Natural killer cell (primary cell): ENCODE measurements at regions of chr2 and their contacts with region 1.

Region 1: DNA sequence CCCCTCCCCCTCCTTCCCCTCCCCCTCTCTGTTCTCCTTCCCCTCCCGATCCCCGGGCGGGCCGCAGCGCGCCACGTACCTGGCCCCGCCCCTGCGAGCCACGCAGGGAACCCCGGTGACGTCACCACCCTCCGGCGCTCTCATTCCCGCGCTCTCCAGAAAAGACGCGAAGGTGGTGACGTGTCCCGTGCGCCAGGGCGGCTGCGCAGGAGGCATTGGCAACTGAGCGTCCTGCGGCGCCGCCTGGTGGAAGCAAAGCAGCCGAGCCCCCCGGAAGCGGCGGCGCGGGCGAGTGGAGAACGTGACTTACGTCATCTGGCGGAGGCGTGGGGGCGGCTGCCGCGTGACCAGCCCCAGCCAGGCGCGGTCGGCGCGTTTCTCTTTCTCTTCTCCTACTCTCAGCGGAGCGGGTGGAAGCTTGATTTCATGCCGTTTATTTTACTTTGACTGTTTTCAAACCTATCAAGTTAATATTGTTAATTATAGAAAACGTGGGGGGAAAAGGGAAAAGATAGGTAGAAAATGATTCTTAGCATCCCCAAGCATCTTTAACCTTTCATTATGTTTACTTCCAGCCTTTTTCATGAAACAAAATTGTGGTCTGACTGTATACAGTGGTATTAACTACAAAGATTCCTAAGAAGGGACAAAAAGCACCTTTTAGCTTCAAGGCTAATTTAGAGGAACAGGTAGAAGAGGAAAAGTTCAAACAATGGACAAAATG is 48.1 kb downstream of the C2orf42 start:
- DNase-seq: peak; percentile 100
- ATAC-seq: peak; percentile 60 to 86 (median 69)
- H3K4me3 ChIP-seq: peak overlapping the region; percentile 65
- H3K4me3 Mint-ChIP-seq: peak overlapping the region; percentile 94
- H3K27ac ChIP-seq: peak overlapping the region; percentile 98
- H3K27ac Mint-ChIP-seq: peak overlapping the region; percentile 98 to 100
- H3K4me1 ChIP-seq: peaks cover 46% of the 10 kb centered on the region
- H3K4me1 Mint-ChIP-seq: peaks cover 40 to 46% of the 10 kb centered on the region in 2 donors
- H3K27me3 ChIP-seq: no peaks in the 10 kb centered on the region
- H3K27me3 Mint-ChIP-seq: no peaks in the 10 kb centered on the region
- CTCF ChIP-seq: peak; percentile 85

Region 2: DNA sequence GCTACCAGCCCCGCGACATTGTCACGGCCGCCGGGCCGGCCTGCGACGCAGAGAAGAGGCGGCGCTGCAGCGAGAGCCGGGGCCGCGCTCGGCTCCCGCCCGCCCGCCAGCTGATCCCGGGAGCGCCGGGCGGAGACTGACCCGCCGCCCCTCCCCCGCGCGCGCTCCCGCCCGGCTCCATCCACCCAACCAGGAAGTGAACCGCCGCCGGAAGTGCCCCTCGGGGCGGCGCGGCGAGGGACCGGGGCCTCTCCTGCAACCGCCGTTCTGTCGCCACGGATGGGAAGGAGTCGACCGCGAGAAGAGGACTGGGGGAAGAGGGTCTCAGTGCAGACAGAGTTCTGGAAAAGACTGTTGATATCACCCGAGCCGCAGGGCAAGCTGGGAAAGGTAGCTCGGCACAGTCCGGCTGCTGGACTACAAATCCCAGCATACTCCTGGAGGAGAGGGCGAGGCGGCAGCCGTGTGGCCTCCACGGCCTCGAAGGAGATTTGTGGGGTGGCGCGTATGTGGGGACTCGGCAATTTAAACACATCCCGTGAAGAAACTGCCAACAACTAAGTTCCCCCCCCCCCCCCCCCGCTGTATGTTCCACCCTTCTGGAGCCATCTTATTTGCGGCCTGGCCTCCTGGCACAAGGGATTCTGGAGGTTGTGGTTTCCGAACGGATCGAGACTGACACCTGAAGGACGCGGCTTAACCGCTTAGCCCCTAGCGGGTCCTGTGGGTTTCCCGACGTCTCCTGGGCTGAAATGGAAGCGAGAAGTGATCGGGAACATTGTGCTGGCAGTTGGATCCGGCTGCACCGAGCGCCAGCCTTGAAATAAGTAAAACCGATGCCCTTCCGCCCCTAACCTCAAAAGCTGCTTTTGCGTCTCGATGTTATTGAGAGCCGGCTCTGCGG is 498.9 kb before region 1 on chr2 and contains the start of gene AAK1:
- intact Hi-C with region 1: loop called (anchors 5 kb)
- DNase-seq: peak; percentile 81 to 90
- ATAC-seq: peak; percentile 58 to 80 (median 74)
- H3K4me3 ChIP-seq: peak within 1 kb of the TSS; percentile 96
- H3K4me3 Mint-ChIP-seq: peak within 1 kb of the TSS; percentile 97
- H3K27ac ChIP-seq: peak within 1 kb of the TSS; percentile 84
- H3K27ac Mint-ChIP-seq: peak within 1 kb of the TSS; percentile 95 to 97
- H3K4me1 ChIP-seq: peaks cover 62% of the 10 kb centered on the region
- H3K4me1 Mint-ChIP-seq: peaks cover 81 to 82% of the 10 kb centered on the region in 2 donors
- H3K27me3 ChIP-seq: no peaks in the 10 kb centered on the region
- H3K27me3 Mint-ChIP-seq: no peaks in the 10 kb centered on the region
- CTCF ChIP-seq: no peak
- total RNA-seq, gene AAK1: 174 to 249 (median 204) TPM

Region 3: GRCh38 chr2:69914170-69914960 is 228.4 kb before region 1 on chr2:
- intact Hi-C with region 1: loop called (anchors 1 kb)
- DNase-seq: peak; percentile 99 to 100
- ATAC-seq: peak; percentile 85 to 95 (median 87)
- H3K4me3 ChIP-seq: peak overlapping the region; percentile 76
- H3K4me3 Mint-ChIP-seq: peak overlapping the region; percentile 85
- H3K27ac ChIP-seq: peak overlapping the region; percentile 91
- H3K27ac Mint-ChIP-seq: peak overlapping the region; percentile 91 to 98
- H3K4me1 ChIP-seq: peaks cover 13% of the 10 kb centered on the region
- H3K4me1 Mint-ChIP-seq: peaks cover 25 to 32% of the 10 kb centered on the region in 2 donors
- H3K27me3 ChIP-seq: no peaks in the 10 kb centered on the region
- H3K27me3 Mint-ChIP-seq: no peaks in the 10 kb centered on the region
- CTCF ChIP-seq: no peak

Region 4: DNA sequence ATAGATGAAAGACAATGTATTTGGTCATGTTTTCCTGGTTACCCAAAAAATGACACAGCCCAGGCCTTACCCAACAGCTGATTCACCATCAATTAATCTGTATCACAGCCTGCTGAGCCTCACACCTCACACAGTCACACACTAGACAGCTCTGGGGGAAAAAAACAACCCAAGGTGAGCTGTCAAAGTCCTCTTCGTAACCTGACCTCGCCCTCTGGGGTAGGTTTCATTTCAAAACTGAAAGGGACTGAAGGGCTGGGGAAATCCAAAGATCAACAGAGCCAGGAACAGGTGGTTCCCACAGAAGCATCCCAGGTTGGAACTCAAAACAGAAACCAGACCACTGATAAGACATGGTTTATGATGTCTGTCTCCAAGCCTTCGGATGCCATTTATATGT is 73.7 kb before region 1 on chr2:
- intact Hi-C with region 1: loop called (anchors 1 kb)
- DNase-seq: peak; percentile 58 to 93
- ATAC-seq: peak; percentile 84 to 93 (median 84)
- H3K4me3 ChIP-seq: no peak overlapping the region
- H3K4me3 Mint-ChIP-seq: peak overlapping the region; percentile 47
- H3K27ac ChIP-seq: peak overlapping the region; percentile 87
- H3K27ac Mint-ChIP-seq: peak overlapping the region; percentile 88 to 94
- H3K4me1 ChIP-seq: peaks cover 31% of the 10 kb centered on the region
- H3K4me1 Mint-ChIP-seq: peaks cover 31 to 35% of the 10 kb centered on the region in 2 donors
- H3K27me3 ChIP-seq: no peaks in the 10 kb centered on the region
- H3K27me3 Mint-ChIP-seq: no peaks in the 10 kb centered on the region
- CTCF ChIP-seq: no peak

Region 5: GRCh38 chr2:70094978-70095719 is 47.6 kb before region 1 on chr2:
- intact Hi-C with region 1: loop called (anchors 2 kb)
- DNase-seq: peak in 1 of 2 donors; percentile 87
- ATAC-seq: peak; percentile 89 to 90 (median 89)
- H3K4me3 ChIP-seq: peak overlapping the region; percentile 0
- H3K4me3 Mint-ChIP-seq: peak overlapping the region; percentile 71
- H3K27ac ChIP-seq: peak overlapping the region; percentile 88
- H3K27ac Mint-ChIP-seq: peak overlapping the region; percentile 97 to 99
- H3K4me1 ChIP-seq: peaks cover 37% of the 10 kb centered on the region
- H3K4me1 Mint-ChIP-seq: peaks cover 33 to 45% of the 10 kb centered on the region in 2 donors
- H3K27me3 ChIP-seq: no peaks in the 10 kb centered on the region
- H3K27me3 Mint-ChIP-seq: no peaks in the 10 kb centered on the region
- CTCF ChIP-seq: no peak

Region 6: DNA sequence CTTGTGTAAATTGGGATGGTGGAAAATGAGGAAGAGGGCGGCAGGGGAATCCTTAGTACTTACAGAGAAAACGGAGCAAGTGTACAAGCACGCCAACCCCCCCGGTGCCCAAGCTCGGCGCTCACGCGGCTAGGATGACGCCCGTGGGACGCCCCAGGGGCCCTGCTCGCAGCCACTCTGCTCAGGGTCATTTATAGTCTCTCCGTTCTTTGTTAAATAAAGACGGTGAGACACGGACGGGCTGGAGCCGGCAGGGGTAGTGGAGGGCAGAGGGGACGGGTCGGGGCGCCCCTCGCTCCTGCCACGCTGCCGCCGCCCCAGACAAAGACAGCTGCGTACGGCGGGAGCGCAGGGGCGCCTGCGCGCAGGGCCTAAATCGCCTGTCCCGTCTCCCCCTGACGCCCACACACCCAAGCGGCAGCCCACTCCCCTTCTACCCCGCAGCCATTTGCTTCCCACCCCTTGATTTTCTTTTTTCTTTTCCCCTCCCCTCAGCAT is 17.7 kb before region 1 on chr2:
- intact Hi-C with region 1: loop called (anchors 1 kb)
- DNase-seq: peak; percentile 68 to 81
- ATAC-seq: peak; percentile 63 to 72 (median 70)
- H3K4me3 ChIP-seq: peak overlapping the region; percentile 62
- H3K4me3 Mint-ChIP-seq: peak overlapping the region; percentile 94
- H3K27ac ChIP-seq: peak overlapping the region; percentile 100
- H3K27ac Mint-ChIP-seq: peak overlapping the region; percentile 96 to 98
- H3K4me1 ChIP-seq: peaks cover 63% of the 10 kb centered on the region
- H3K4me1 Mint-ChIP-seq: peaks cover 71 to 78% of the 10 kb centered on the region in 2 donors
- H3K27me3 ChIP-seq: no peaks in the 10 kb centered on the region
- H3K27me3 Mint-ChIP-seq: no peaks in the 10 kb centered on the region
- CTCF ChIP-seq: no peak

Region 7: DNA sequence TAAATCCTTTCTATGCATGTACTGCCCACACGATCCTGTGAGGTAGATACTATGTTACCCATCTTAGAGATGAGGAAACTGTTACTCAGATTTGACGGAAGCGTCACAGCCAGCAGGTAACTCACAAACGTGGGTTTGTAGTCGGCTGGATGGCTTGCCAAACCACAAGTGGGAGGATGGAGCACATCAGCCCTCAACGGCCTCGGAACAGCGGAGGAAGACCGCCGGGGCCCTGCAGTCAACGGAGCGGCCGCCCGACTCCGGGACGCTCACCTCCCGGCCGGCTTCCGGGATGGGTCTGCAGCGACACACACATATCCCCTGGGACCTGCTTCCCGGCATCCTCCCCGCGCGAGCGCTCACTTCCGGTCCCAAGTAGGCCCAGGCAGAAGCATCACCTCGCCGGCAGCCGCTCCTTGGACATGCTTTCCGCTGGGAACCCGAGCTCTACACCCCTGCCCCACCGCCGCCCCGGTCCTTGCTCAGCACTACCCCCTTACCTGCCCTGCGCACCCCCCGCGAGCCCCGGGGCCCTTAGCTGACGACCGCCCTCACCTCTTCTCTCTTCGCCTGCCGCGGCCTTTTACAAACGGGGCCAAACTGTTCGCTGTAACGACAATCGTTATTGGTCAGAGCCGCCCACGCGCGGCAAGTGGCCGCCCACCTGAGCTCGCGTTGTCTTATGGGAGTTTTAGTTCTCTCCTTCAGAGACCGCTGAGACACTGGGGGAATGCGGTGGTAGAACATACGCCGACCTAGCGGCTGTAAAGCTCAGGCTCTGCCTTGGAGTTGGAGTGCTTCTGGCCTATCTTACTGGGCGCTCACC is 47.9 kb after region 1 on chr2 and contains the start of gene C2orf42:
- intact Hi-C with region 1: loop called (anchors 2 kb)
- DNase-seq: peak; percentile 94 to 98
- ATAC-seq: peak; percentile 84 to 96 (median 88)
- H3K4me3 ChIP-seq: peak within 1 kb of the TSS; percentile 78
- H3K4me3 Mint-ChIP-seq: peak within 1 kb of the TSS; percentile 100
- H3K27ac ChIP-seq: peak within 1 kb of the TSS; percentile 90
- H3K27ac Mint-ChIP-seq: peak within 1 kb of the TSS; percentile 96 to 98
- H3K4me1 ChIP-seq: peaks cover 9% of the 10 kb centered on the region
- H3K4me1 Mint-ChIP-seq: peaks cover 16 to 19% of the 10 kb centered on the region in 2 donors
- H3K27me3 ChIP-seq: no peaks in the 10 kb centered on the region
- H3K27me3 Mint-ChIP-seq: no peaks in the 10 kb centered on the region
- CTCF ChIP-seq: no peak
- total RNA-seq, gene C2orf42: 22.7 to 31.5 (median 25.7) TPM

Region 8: DNA sequence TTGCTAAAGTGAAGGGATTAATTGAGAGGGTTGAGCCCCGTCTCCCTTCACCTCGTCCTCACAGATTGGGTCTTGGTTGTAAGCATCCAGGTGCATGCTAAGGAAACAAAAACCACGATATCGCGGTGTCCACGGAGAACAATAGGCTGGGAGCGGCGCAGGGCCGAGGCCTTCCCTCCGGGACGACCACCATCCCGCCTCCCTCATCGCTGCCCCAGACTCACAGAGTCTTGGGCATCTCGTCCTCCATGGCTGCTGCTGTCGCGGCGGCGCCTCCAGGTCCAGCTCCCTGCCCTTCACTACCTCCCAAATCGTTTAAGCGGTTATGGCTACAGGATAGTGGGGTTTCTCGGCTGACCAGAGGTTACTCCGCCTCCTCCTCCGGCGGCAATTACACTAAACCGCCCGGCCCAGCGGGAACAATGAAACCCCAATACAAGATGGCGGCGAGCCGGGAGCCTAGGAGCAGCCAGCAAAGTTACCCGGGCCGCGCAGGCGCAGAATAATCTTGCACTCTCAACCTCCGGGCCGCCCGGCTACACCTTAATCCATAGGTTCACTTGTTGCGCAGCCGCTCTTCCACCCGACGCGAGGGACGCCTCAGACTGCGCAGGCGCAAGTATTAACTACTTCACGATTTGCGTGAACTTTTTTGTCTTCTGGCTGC is 105.6 kb after region 1 on chr2 and contains the start of gene TIA1:
- intact Hi-C with region 1: no loop called
- DNase-seq: peak; percentile 97 to 100
- ATAC-seq: peak; percentile 94 to 98 (median 96)
- H3K4me3 ChIP-seq: peak within 1 kb of the TSS; percentile 85
- H3K4me3 Mint-ChIP-seq: peak within 1 kb of the TSS; percentile 98
- H3K27ac ChIP-seq: peak within 1 kb of the TSS; percentile 92
- H3K27ac Mint-ChIP-seq: peak within 1 kb of the TSS; percentile 91 to 98
- H3K4me1 ChIP-seq: peaks cover 9% of the 10 kb centered on the region
- H3K4me1 Mint-ChIP-seq: peaks cover 37 to 45% of the 10 kb centered on the region in 2 donors
- H3K27me3 ChIP-seq: no peaks in the 10 kb centered on the region
- H3K27me3 Mint-ChIP-seq: no peaks in the 10 kb centered on the region
- CTCF ChIP-seq: no peak
- total RNA-seq, gene TIA1: 76.9 to 113 (median 93.2) TPM